ENCODE measurements at regions of chr11 and their contacts with region 1.

Region 1: DNA sequence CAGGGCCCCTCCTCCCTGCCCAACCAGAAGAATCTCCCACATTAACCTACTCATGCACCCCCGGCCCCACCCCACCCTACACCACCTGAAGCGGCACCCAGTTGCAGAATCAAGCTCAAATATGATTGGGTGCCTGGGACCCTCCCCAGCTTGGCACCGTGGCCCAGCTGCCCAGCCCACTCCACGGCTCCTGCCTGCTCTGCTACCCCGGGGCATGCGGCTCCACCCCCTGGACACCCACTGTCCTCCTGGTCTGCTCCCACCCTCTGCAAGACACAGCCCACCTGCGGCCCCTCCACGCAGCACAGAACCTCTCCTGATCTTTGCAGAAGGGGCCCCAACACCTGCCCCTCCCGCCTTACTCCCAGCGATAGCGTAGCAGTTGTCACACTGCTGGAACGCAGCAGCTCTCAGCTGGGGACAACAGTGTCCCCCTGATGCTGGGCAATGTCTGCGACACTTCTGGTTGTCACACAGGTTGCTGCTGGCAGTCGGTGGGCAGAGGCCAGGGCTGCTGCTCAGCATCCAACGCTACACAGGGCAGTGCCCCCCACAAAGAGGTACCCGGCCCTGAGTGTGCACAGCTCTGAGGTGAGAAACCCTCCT is 32.0 kb upstream of the TESMIN start:
- DNase-seq: no peak
- ATAC-seq: no peak
- H3K4me3 ChIP-seq: no peak overlapping the region
- H3K4me3 Mint-ChIP-seq: no peak overlapping the region
- H3K27ac ChIP-seq: no peak overlapping the region
- H3K27ac Mint-ChIP-seq: no peak overlapping the region
- H3K4me1 ChIP-seq: no peaks in the 10 kb centered on the region
- H3K4me1 Mint-ChIP-seq: no peaks in the 10 kb centered on the region
- H3K27me3 ChIP-seq: no peaks in the 10 kb centered on the region
- H3K27me3 Mint-ChIP-seq: no peaks in the 10 kb centered on the region
- CTCF ChIP-seq: no peak

Region 2: GRCh38 chr11:68099474-68100405 is 683.6 kb before region 1 on chr11:
- CTCF ChIA-PET with region 1: no interaction called
- POLR2A ChIA-PET with region 1: no interaction called
- intact Hi-C with region 1: no loop called
- DNase-seq: peak; percentile 28
- ATAC-seq: no peak
- H3K4me3 ChIP-seq: peak overlapping the region in 3 of 5 experiments; percentile 5 to 22 (median 12)
- H3K4me3 Mint-ChIP-seq: peak overlapping the region; percentile 50
- H3K27ac ChIP-seq: peak overlapping the region; percentile 14 to 68
- H3K27ac Mint-ChIP-seq: peak overlapping the region; percentile 78
- H3K4me1 ChIP-seq: peaks cover 14 to 19% of the 10 kb centered on the region in 2 donors
- H3K4me1 Mint-ChIP-seq: peaks cover 23% of the 10 kb centered on the region
- H3K27me3 ChIP-seq: no peaks in the 10 kb centered on the region
- H3K27me3 Mint-ChIP-seq: no peaks in the 10 kb centered on the region
- CTCF ChIP-seq: no peak

Region 3: DNA sequence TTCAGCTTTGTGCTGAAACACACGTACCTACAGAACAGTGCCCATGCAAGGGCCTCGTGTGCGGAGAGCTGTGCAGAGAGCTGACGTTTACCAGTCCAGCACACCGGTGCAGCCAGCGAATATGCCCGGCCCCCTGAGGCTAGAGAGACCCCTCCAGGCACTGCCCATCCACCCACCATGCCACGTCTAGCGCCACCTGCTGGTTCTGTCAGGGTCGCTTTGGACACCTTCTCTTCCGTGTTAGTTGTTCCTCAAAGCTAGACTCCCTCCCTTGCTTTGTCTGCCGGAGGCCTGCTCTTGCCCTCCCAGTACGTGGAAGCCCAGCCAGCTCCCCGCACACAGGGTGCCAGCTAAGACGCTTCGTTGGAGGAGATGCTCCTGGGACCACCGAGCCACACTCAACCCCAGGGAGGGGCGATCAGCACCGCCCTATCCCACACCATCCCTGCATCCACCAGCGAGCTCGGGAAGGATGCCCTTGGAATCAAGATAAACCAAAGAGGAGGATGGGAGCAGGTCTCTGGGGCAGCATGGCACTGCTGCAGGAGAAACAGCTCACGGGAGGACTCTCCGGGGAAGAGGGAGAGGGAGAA is 15.0 kb after region 1 on chr11:
- CTCF ChIA-PET with region 1: no interaction called
- POLR2A ChIA-PET with region 1: interaction called, 10 read pairs
- intact Hi-C with region 1: no loop called
- DNase-seq: peak; percentile 51
- ATAC-seq: no peak
- H3K4me3 ChIP-seq: no peak overlapping the region
- H3K4me3 Mint-ChIP-seq: no peak overlapping the region
- H3K27ac ChIP-seq: no peak overlapping the region
- H3K27ac Mint-ChIP-seq: no peak overlapping the region
- H3K4me1 ChIP-seq: no peaks in the 10 kb centered on the region
- H3K4me1 Mint-ChIP-seq: no peaks in the 10 kb centered on the region
- H3K27me3 ChIP-seq: no peaks in the 10 kb centered on the region
- H3K27me3 Mint-ChIP-seq: no peaks in the 10 kb centered on the region
- CTCF ChIP-seq: peak; percentile 75

Region 4: GRCh38 chr11:68912254-68912653 is 128.9 kb after region 1 on chr11:
- CTCF ChIA-PET with region 1: no interaction called
- POLR2A ChIA-PET with region 1: no interaction called
- intact Hi-C with region 1: no loop called
- DNase-seq: no peak
- ATAC-seq: no peak
- H3K4me3 ChIP-seq: no peak overlapping the region
- H3K4me3 Mint-ChIP-seq: no peak overlapping the region
- H3K27ac ChIP-seq: no peak overlapping the region
- H3K27ac Mint-ChIP-seq: no peak overlapping the region
- H3K4me1 ChIP-seq: no peaks in the 10 kb centered on the region
- H3K4me1 Mint-ChIP-seq: no peaks in the 10 kb centered on the region
- H3K27me3 ChIP-seq: no peaks in the 10 kb centered on the region
- H3K27me3 Mint-ChIP-seq: no peaks in the 10 kb centered on the region
- CTCF ChIP-seq: no peak

Region 5: DNA sequence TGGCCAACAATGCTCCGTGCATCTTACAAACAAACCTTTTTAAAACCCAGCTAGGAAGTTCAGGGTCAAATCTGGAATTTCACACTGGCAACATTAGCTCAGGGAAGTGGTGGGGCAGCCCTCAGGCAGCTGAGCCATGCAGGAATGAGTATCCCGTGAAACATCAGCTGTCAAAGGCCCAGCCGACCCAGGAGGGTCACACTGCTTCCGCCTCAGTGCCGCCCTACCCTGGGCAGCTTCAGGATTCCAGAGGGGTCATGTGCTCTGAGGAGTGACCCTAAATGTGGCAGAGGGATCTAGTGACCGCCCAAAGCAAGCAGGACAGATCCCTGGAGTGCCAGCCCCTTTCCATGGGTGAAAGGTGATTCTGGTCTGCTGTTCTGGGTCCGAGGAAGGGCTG is 771.6 kb after region 1 on chr11:
- CTCF ChIA-PET with region 1: no interaction called
- POLR2A ChIA-PET with region 1: no interaction called
- intact Hi-C with region 1: no loop called
- DNase-seq: no peak
- ATAC-seq: no peak
- H3K4me3 ChIP-seq: no peak overlapping the region
- H3K4me3 Mint-ChIP-seq: no peak overlapping the region
- H3K27ac ChIP-seq: no peak overlapping the region
- H3K27ac Mint-ChIP-seq: no peak overlapping the region
- H3K4me1 ChIP-seq: no peaks in the 10 kb centered on the region
- H3K4me1 Mint-ChIP-seq: no peaks in the 10 kb centered on the region
- H3K27me3 ChIP-seq: no peaks in the 10 kb centered on the region
- H3K27me3 Mint-ChIP-seq: no peaks in the 10 kb centered on the region
- CTCF ChIP-seq: no peak

Measured in B cell (primary cell).